IMR-90 (cell line): ENCODE measurements at regions of chr19 and their contacts with region 1.

Region 1: DNA sequence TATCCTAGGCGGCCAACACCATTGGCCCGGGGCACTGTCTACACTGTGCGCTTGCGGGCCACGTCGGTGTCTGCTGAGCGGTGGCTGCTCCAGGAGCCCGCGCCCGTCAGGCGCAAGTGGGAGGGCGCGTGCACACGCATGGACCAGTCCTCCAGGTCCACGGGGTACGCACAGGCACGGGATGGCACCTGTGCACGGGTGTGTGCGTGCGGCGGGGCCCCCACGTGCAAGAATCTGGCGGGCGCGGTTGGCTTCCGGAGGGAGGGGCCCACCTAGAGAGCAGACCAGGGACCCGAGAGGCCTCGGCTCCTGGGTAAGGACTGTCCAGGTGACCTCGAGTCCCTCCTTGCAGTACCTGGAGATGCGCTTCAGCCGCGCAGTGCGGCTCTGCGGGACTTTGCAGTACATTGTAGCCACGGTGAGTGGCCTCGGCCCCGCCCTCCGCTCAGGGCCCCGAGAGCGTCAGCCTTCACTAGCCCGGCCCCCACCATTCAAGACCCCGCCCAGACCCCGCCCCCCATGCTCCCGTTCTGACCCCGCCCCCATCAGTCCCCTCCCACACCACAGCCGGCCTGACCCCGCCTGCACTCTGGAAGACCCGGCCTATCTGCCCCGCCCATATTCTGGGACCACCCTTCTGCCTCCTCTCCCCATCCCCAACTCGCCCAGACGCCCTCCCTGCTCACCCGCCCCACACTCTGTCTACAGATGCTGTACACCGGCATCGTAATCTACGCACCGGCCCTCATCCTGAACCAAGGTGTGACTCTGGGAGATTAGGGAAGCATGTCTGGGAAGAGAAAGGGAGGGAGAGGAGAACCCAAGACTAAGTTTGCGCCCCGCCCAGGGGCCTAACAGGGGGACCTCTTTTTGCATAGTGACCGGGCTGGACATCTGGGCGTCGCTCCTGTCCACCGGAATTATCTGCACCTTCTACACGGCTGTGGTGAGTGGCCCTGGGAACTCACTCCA is 2.3 kb downstream of the SLC5A5 start:
- DNase-seq: no peak
- ATAC-seq: peak; percentile 64
- H3K4me3 ChIP-seq: no peak overlapping the region
- H3K27ac ChIP-seq: no peak overlapping the region
- H3K4me1 ChIP-seq: no peaks in the 10 kb centered on the region
- H3K27me3 ChIP-seq: peaks cover 47% of the 10 kb centered on the region
- CTCF ChIP-seq: no peak
- POLR2A ChIP-seq: no peak
- RAD21 ChIP-seq: no peak

Region 2: DNA sequence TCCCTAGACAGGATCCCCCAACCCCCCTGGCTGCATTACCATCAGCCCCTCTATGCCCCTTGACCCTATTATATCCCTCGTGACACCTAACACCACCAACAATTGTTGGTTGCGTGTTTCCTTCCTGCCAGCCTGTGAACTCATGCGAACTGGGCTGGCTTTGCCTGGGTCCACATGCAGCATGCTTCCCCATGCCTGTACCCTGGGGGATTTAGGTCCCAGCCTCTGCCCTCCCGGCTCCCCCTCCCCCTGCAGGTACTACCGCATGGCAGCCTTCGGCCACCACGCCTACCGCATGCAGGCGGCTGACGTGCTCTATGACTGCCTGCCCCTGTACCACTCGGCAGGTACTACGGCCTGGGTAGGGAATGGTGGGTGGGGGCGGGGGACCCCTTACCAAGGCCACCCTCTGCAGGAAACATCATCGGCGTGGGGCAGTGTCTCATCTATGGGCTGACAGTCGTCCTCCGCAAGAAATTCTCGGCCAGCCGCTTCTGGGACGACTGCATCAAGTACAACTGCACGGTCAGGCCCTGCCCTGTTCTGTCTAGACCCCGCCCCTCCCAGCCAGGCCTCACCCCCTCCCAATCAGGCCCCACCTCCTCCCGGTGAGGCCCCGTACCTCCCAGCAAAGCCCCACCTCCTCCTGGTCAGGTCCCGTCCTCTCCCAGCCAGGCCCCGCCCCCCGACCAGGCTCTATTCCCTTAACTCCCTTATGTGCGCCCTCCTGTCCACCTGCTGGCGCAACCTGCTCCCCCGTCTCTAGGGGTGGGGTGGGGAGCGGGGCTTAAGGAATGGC is 385.3 kb before region 1 on chr19:
- CTCF ChIA-PET with region 1: no interaction called
- POLR2A ChIA-PET with region 1: no interaction called
- dilution Hi-C with region 1: no loop called
- in situ Hi-C with region 1: no loop called
- intact Hi-C with region 1: no loop called
- DNase-seq: no peak
- ATAC-seq: peak; percentile 55
- H3K4me3 ChIP-seq: no peak overlapping the region
- H3K27ac ChIP-seq: no peak overlapping the region
- H3K4me1 ChIP-seq: no peaks in the 10 kb centered on the region; the same call in 1 of the 2 replicates
- H3K27me3 ChIP-seq: no peaks in the 10 kb centered on the region
- CTCF ChIP-seq: no peak
- POLR2A ChIP-seq: no peak
- RAD21 ChIP-seq: no peak

Region 3: DNA sequence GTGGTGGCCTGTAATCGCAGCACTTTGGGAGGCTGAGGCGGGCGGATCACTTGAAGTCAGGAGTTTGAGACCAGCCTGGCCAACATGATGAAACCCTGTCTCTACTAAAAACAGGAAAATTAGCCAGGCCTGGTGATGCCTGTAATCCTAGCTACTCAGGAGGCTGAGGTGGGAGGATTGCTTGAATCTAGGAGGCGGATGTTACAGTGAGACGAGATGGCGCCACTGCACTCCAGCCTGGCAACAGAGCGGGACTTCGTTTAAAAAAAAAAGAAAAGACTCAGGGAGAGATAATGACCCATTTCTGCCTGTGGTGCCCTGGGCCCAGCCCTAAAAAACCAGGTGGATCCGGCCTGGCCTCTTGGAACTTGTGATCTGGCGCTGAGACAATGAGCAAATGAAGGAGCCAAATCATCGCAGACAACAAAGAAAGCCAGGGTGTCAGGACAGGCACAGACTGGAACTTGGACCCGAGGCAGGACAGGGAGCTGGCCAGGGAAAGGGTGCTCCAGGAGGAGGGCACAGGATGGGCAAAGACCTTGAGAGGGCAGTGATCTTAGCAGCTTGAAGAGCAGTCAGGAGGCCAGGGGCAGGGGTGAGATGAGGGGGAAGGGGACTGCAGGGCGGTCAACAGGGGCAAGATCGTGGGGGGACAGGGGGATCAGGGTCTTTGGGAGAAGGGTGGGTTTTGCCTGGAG is 25.3 kb before region 1 on chr19:
- CTCF ChIA-PET with region 1: no interaction called
- POLR2A ChIA-PET with region 1: no interaction called
- dilution Hi-C with region 1: no loop called
- in situ Hi-C with region 1: no loop called
- intact Hi-C with region 1: no loop called
- DNase-seq: no peak
- ATAC-seq: no peak
- H3K4me3 ChIP-seq: no peak overlapping the region
- H3K27ac ChIP-seq: no peak overlapping the region
- H3K4me1 ChIP-seq: peaks cover 4% of the 10 kb centered on the region
- H3K27me3 ChIP-seq: peaks cover 2% of the 10 kb centered on the region; the same call in 1 of the 2 replicates
- CTCF ChIP-seq: no peak
- POLR2A ChIP-seq: no peak
- RAD21 ChIP-seq: no peak

Region 4: GRCh38 chr19:17932485-17933338 is 58.6 kb after region 1 on chr19 and contains the start of gene CCDC124:
- CTCF ChIA-PET with region 1: interaction called, 33 read pairs
- POLR2A ChIA-PET with region 1: no interaction called
- dilution Hi-C with region 1: no loop called
- in situ Hi-C with region 1: no loop called
- intact Hi-C with region 1: loop called (anchors 1 kb)
- DNase-seq: peak; percentile 89
- ATAC-seq: peak; percentile 99
- H3K4me3 ChIP-seq: peak within 1 kb of the TSS; percentile 70
- H3K27ac ChIP-seq: peak within 1 kb of the TSS; percentile 87
- H3K4me1 ChIP-seq: peaks cover 3% of the 10 kb centered on the region; the same call in 1 of the 2 replicates
- H3K27me3 ChIP-seq: peaks cover 2% of the 10 kb centered on the region; the same call in 1 of the 2 replicates
- CTCF ChIP-seq: peak; percentile 99
- POLR2A ChIP-seq: peak; percentile 35; the same call in 1 of the 2 replicates
- RAD21 ChIP-seq: peak; percentile 94
- total RNA-seq, gene CCDC124: 29.4 and 30.1 TPM in 2 replicates